RWPE1 (cell line): ENCODE measurements at regions of chr1 and their contacts with region 1.

Region 1: GRCh38 chr1:21368515-21369289 is 71.2 kb upstream of the NBPF3 start:
- DNase-seq: peak; percentile 73
- H3K27ac ChIP-seq: no peak overlapping the region
- CTCF ChIP-seq: peak; percentile 99

Region 2: DNA sequence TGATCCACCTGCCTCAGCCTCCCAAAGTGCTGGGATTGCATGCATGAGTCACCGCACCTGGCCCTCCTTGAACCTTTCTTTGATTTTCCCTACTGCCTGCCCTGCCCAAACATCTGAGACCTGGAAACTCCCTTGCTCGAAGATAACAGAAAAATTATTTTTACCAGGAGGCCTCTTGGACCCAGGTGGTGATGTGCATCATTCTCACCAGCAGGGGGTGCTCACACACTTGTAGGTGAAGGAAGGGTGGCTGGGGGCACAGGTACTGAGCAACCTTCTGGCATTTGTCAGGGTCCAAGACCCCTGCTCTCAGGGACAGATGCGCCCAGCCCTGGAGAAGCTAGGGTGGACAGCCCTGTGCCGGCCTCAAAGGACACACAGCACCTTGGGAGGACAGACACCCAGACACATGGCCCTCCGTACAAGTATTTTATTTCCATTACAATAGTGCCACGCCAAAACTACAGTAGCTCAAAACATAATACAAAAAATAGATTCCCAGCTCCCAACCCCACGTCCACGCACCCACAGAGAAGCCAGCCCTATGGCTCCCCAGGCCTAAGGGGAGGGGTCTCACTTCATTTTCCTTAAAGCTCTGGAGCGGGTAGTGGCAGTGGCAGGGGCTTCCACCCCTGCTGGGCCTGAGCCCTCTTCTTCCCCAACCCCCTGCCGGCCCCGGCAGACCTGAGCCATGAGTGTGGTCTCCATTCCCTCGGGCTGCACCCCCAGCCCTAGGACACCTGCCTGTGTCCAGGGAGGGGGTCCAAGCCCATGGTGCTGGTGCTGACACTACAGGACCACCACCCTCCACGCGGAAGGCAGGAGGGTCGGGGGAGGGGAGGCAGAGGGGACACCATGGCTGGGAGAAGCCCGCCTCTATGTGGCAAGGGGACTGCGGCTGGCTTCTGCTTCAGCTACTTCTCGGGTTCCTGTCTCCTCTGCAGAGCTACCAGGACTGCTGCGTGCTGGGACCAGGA is 151.6 kb before region 1 on chr1:
- CTCF ChIA-PET with region 1: interaction called, 13 read pairs
- POLR2A ChIA-PET with region 1: no interaction called
- DNase-seq: no peak
- H3K27ac ChIP-seq: no peak overlapping the region
- CTCF ChIP-seq: peak; percentile 65

Region 3: GRCh38 chr1:21232044-21232443 is 136.7 kb before region 1 on chr1:
- CTCF ChIA-PET with region 1: interaction called, 79 read pairs
- POLR2A ChIA-PET with region 1: no interaction called
- DNase-seq: peak; percentile 59
- H3K27ac ChIP-seq: no peak overlapping the region
- CTCF ChIP-seq: peak; percentile 80

Region 4: GRCh38 chr1:21255278-21255942 is 113.3 kb before region 1 on chr1:
- CTCF ChIA-PET with region 1: interaction called, 104 read pairs
- POLR2A ChIA-PET with region 1: no interaction called
- DNase-seq: peak; percentile 54
- H3K27ac ChIP-seq: peak overlapping the region; percentile 77; the same call in 1 of the 2 replicates
- CTCF ChIP-seq: peak; percentile 79

Region 5: GRCh38 chr1:21261551-21262281 is 107.0 kb before region 1 on chr1:
- CTCF ChIA-PET with region 1: interaction called, 104 read pairs
- POLR2A ChIA-PET with region 1: no interaction called
- DNase-seq: peak; percentile 80
- H3K27ac ChIP-seq: peak overlapping the region; percentile 92
- CTCF ChIP-seq: no peak

Region 6: DNA sequence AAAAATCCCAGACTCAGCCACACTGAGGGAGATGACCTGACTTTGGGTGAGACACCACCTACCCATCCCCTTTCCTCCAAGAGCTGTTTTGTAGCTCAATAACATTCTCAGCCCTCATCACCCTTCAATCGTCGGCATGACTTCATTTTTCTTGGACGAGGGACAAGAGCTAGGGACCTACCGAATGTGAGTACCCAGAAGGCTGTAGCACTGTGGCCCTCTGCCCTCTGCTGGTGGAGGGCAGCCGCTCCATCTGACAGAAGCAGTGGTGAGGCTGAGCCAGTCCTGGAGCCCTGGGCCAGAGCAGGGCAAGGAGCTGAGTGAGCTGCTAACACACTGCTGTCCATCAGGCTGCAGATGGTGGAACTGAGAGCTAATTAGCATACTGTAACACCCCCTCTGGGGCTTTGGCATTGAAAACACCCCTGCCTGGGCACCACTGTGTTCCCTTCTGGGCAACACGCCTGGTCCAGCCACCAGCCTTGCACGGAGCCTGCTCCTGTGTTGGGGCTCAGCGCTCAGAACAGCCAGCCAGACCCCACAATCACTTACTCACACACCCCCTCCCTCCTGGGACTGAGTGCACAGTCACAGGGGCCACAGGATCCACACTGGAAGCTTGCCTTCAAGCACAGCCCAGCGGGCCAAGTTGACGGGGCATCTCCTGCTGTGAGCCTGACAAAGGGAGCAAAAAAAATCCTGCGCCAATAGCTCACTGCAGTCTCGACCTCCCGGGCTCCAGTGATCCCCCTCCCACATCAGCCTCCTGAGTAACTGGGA is 122.3 kb after region 1 on chr1:
- CTCF ChIA-PET with region 1: interaction called, 14 read pairs
- POLR2A ChIA-PET with region 1: no interaction called
- DNase-seq: no peak
- H3K27ac ChIP-seq: no peak overlapping the region
- CTCF ChIP-seq: peak; percentile 34

Region 7: GRCh38 chr1:21659099-21659923 is 290.6 kb after region 1 on chr1:
- CTCF ChIA-PET with region 1: interaction called, 10 read pairs
- POLR2A ChIA-PET with region 1: no interaction called
- DNase-seq: peak; percentile 88
- H3K27ac ChIP-seq: no peak overlapping the region
- CTCF ChIP-seq: peak; percentile 95